Heart right ventricle (tissue), 16 donors: ENCODE measurements at regions of chr1 and their contacts with region 1.

Region 1: GRCh38 chr1:80869299-80869698 is 931.4 kb upstream of the ADGRL2 start:
- DNase-seq: no peak
- ATAC-seq: no peak
- H3K4me3 ChIP-seq: no peak overlapping the region
- H3K27ac ChIP-seq: no peak overlapping the region
- H3K4me1 ChIP-seq: no peaks in the 10 kb centered on the region
- H3K27me3 ChIP-seq: no peaks in the 10 kb centered on the region
- CTCF ChIP-seq: no peak

Region 2: DNA sequence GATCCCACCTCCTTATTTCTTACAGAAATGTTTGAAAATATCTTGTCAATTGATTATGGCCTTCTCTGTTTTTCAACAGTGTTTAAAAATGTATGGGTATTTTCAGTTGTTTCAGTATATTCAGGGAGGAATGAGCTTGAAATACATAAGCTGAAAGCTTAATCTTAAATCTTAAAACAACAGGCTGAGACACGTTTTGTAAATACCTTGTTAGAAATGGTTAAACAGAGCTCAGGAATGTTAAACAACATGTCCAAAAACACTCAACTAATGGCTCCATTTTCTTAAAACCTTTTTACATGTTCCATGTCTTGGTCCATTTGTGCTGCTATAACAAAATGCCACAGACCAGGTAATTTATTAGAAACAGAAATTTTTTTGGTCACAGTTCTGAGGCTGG is 22.3 kb before region 1 on chr1:
- intact Hi-C with region 1: loop called in 1 of 10 experiments (anchors 1 kb)
- DNase-seq: no peak
- ATAC-seq: no peak
- H3K4me3 ChIP-seq: no peak overlapping the region
- H3K27ac ChIP-seq: no peak overlapping the region
- H3K4me1 ChIP-seq: no peaks in the 10 kb centered on the region
- H3K27me3 ChIP-seq: no peaks in the 10 kb centered on the region
- CTCF ChIP-seq: no peak